Cardiac septum (tissue), 1 donor: ENCODE measurements at regions of chr18 and their contacts with region 1.

Region 1: GRCh38 chr18:40056079-40056692 is 1898.8 kb upstream of the PIK3C3 start:
- DNase-seq: no peak

Region 2: DNA sequence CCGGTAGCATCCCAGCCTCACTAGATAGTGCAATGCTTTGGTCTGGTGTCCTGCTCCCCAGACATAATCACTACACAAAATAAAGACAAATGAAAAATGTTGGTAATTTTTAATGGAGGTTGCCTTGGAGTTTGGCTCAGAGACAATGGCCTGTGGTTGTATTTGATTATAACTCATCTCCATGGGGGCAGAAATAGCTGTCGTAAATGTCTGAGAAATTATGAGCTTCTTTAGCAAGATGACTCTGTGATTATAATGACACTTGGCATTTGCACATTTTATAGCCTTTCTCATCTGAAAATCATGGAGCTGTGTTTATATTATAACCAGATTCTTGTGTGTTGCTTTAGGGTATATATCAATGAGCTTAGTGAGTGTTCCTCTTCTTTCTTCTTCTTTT is 710.9 kb before region 1 on chr18:
- intact Hi-C with region 1: no loop called
- DNase-seq: no peak

Region 3: DNA sequence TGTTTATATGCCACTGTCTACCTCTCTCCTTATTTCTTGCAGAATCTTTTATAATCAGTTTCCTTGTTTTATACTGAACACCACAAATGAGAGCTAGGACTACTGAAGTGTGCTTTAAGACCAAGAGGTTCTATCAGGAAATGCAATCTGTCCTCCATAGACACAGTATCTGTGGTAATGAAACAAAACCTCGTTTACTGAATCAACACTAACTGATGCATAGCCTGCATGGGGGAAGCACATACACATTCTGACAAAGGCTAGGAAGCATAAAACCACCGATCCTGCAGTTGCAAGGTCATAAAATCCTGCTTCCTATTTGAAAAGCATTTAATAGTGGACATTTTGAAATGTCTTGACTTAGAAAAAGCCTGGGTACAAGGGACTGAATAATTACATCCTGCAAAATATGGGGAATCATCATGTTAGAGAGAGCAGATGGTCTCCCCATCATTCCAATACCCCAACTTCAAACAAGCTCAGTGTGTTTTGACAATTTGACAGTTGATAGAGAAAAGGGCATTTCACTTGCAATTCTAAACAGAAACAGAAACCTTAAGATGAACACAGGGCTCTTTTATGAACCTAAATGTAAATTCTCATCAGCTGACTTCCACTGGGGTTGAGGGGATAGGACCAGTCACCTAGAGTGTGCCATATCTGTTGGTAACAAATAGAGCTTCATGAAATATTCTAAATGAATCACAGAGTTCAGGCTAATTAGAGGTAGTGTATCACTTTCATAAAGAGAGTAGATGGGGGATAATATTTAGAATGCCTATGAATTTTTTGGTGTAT is 53.3 kb after region 1 on chr18:
- intact Hi-C with region 1: loop called (anchors 10 kb)
- DNase-seq: no peak

Region 4: GRCh38 chr18:40186677-40187076 is 130.5 kb after region 1 on chr18:
- intact Hi-C with region 1: no loop called
- DNase-seq: no peak